ENCODE measurements at regions of chr6 and their contacts with region 1.

Region 1: GRCh38 chr6:37018198-37019064 is 13.0 kb downstream of the FGD2 start:
- DNase-seq: peak; percentile 89
- H3K4me3 ChIP-seq: no peak overlapping the region; a peak in 1 of 4 replicates
- H3K27ac ChIP-seq: peak overlapping the region in 1 of 2 experiments; percentile 59; a peak in 3 of 4 replicates
- H3K4me1 ChIP-seq: peaks cover 0 to 19% of the 10 kb centered on the region in 2 experiments; a peak in 1 of 4 replicates
- H3K27me3 ChIP-seq: no peaks in the 10 kb centered on the region
- CTCF ChIP-seq: peak; percentile 92
- EP300 ChIP-seq: peak in 1 of 2 experiments; percentile 11; a peak in 1 of 4 replicates
- RAD21 ChIP-seq: peak; percentile 94

Region 2: GRCh38 chr6:36788768-36789167 is 229.7 kb before region 1 on chr6:
- CTCF ChIA-PET with region 1: interaction called, 12 read pairs
- POLR2A ChIA-PET with region 1: no interaction called
- DNase-seq: no peak
- H3K4me3 ChIP-seq: no peak overlapping the region
- H3K27ac ChIP-seq: no peak overlapping the region
- H3K4me1 ChIP-seq: peaks cover 0 to 14% of the 10 kb centered on the region in 2 experiments; a peak in 2 of 4 replicates
- H3K27me3 ChIP-seq: no peaks in the 10 kb centered on the region
- CTCF ChIP-seq: no peak
- EP300 ChIP-seq: no peak
- RAD21 ChIP-seq: no peak

Region 3: DNA sequence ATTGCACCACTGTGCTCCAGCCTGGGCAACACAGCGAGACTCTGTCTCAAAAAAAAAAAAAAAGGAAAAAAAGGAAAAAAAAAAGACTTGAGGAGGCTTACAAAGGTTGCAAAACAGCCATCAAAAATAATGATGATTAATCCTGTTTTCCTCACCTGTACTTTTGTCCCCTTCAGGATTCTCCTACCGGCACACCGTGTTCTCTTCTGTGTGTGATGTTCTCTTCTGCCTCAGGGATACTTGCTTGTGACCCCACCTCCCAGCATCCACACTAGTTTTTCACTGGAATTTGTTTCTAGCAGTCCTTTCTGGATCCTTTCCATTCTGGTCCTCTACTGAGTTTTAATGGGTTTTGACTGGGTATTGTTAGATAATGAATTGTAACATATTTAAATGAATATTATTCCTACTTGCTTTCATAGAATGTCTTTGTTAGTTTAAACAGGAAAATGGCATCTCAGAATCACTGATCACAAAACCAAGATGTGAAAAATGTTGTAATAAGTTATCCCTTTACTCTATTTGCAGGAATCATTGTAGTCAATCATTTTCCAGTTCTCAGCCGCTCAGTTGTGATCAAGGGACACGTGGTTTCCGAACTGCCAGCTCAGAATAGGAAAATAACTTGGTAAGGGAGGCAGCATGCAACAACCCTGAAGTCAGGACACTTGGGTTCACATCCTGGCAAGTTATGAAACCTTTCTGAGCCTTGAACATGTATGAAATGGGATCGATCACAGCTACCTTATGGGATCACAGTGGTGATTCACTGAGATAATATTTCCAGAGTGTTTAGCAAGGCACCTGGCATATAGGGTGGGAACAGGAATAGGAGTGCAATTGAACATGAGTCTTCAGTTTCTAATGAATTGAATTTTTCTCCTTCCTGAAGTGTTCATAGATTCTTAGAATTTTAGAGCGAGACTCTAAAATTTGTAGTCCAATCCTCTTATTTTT is 124.2 kb before region 1 on chr6:
- CTCF ChIA-PET with region 1: interaction called, 10 read pairs
- POLR2A ChIA-PET with region 1: no interaction called
- DNase-seq: no peak
- H3K4me3 ChIP-seq: no peak overlapping the region
- H3K27ac ChIP-seq: no peak overlapping the region
- H3K4me1 ChIP-seq: no peaks in the 10 kb centered on the region
- H3K27me3 ChIP-seq: no peaks in the 10 kb centered on the region
- CTCF ChIP-seq: no peak
- EP300 ChIP-seq: no peak
- RAD21 ChIP-seq: no peak

Region 4: DNA sequence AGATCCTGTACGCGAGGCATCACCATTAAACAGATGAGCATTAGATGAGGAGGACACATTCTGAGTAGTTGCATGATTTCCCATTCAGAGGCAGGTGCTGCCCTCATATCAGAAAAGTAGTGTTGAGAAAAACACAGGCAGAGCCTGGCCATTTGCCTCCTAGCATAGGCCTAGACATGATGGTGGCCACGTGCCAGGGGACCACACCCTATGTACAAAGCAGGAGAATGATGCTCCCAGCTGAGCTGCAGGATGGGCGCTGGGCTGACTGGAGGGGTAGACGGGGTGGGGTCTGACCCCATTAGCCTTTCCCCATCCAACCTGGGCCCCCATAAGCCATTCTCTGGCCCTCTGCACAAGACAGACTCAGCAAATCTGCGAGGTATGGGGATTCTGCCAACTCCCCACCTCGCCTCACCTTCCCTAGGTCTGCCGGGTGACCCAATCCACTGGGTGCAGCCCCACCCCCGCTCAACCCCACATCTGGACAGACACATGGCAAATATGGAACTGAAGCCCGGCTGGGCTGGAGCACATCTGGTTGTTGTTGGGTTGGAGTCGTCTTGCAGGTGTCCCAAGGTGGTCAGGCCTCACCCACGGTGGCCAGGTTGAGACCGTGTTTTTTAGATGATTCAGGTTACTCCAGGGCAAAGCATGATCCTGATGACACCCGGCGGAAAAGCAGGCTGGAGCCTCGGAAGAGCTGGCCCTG is 50.0 kb before region 1 on chr6:
- CTCF ChIA-PET with region 1: interaction called, 13 read pairs
- POLR2A ChIA-PET with region 1: no interaction called
- DNase-seq: no peak
- H3K4me3 ChIP-seq: no peak overlapping the region
- H3K27ac ChIP-seq: no peak overlapping the region
- H3K4me1 ChIP-seq: peaks cover 3 to 11% of the 10 kb centered on the region in 2 experiments; a peak in 1 of 4 replicates
- H3K27me3 ChIP-seq: no peaks in the 10 kb centered on the region
- CTCF ChIP-seq: no peak
- EP300 ChIP-seq: no peak
- RAD21 ChIP-seq: no peak

Region 5: DNA sequence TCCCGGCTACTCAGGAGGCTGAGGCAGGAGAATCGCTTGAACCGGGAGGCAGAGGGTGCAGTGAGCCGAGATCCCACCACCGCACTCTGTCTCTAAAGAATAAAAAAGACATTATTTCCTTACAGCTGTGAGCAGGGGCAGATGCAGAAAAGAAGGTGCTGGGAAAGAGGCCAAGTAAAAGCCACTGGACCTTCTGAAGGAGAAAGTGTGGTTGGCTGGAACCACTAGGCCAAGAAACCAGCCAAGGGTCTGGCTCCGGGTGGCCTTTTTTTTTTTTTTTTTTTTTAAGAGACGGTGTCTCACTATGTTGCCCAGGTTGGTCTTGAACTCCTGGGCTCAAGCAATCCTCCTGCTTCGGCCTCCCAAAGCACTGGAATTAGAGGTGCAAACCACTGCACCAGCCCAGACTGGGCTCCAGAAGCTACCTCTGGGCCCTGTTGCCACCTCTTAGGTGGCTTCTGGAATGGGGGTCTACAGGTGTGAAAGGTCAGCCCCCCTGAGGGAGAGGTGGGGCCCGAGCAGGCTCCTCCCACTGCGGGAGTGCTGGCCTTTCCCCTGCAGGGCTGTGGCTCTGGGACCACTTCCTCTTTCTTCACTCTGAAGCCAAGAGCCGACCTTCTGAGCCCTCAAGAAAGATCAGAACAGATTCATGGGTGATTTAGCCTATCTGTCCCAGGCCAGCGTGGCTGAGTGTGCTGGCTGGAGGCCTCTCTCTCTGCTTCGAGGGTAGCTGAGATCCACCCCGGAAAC is 13.2 kb before region 1 on chr6 and contains the start of gene FGD2:
- CTCF ChIA-PET with region 1: interaction called, 78 read pairs
- POLR2A ChIA-PET with region 1: no interaction called
- DNase-seq: no peak
- H3K4me3 ChIP-seq: no peak within 1 kb of the TSS
- H3K27ac ChIP-seq: no peak within 1 kb of the TSS
- H3K4me1 ChIP-seq: no peaks in the 10 kb centered on the region; a peak in 1 of 4 replicates
- H3K27me3 ChIP-seq: no peaks in the 10 kb centered on the region; the same call in 1 of the 2 replicates
- CTCF ChIP-seq: no peak
- EP300 ChIP-seq: no peak
- RAD21 ChIP-seq: no peak
- polyA plus RNA-seq, gene FGD2: not detected in 2 replicates

Region 6: DNA sequence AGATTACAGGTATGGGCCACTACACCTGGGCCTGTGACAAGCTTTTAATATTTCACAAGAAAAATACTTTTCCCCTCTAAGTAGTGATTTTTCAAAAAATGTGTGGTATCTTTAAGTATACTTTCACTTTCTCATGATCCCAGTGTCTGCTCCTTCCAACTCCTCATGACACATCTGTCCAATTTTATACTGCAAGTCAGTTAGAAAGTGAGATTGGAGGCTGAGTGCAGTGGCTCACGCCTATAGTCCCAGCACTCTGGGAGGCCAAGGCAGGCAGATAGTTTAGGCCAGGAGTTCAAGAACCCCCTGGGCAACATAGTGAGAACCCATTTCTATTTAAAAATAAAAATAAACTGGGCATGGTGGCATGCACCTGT is 171.7 kb after region 1 on chr6:
- CTCF ChIA-PET with region 1: interaction called, 15 read pairs
- POLR2A ChIA-PET with region 1: no interaction called
- DNase-seq: no peak
- H3K4me3 ChIP-seq: no peak overlapping the region
- H3K27ac ChIP-seq: no peak overlapping the region
- H3K4me1 ChIP-seq: peaks cover 0 to 5% of the 10 kb centered on the region in 2 experiments; a peak in 1 of 4 replicates
- H3K27me3 ChIP-seq: no peaks in the 10 kb centered on the region
- CTCF ChIP-seq: no peak
- EP300 ChIP-seq: no peak
- RAD21 ChIP-seq: no peak

Measured in SK-N-SH (cell line).